Psoas muscle (tissue), 8 donors: ENCODE measurements at regions of chr9 and their contacts with region 1.

Region 1: DNA sequence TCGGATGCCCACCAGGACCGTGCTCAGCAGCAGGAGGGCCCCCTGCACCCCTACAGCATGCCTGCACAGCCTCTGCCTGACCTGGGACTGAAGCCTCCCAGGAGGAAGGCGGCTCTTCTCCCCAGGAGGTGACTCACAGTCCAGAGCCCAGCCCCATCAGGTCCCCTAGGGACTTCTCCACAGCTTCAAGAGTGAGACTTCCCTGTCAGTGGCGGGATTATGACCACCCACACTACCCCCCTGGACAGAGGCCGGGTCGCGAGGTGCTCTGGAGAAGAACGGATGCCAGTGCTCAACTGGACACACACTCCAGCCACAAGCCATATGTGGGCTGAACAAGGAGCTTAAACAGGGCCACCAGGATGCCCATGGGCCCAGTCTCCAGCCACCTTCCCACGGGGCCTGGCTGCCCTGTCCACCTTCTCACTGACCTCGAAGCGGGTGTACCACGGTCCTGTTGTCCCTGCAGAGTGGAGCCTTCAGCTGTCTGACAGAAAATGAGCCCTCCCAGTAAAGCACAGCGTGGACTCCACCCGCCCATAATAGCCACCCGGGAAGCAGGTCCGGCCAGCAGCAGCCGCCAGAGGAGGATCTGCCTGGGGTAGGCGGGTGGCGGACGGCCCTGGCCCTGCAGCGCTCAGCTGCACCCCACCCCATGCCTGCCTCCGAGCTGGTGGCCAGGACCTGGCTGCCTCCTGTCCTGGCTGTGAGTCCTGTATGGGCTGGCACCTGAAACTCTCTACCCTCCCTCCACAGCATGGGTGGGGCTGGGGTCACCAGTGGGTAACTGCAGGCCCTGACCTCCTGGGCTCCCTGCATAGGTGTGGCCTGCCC is 54.7 kb downstream of the SEMA4D start:
- DNase-seq: no peak
- ATAC-seq: no peak
- H3K4me3 ChIP-seq: no peak overlapping the region
- H3K27ac ChIP-seq: no peak overlapping the region
- H3K4me1 ChIP-seq: peaks cover 58% of the 10 kb centered on the region
- H3K27me3 ChIP-seq: no peaks in the 10 kb centered on the region
- CTCF ChIP-seq: no peak

Region 2: DNA sequence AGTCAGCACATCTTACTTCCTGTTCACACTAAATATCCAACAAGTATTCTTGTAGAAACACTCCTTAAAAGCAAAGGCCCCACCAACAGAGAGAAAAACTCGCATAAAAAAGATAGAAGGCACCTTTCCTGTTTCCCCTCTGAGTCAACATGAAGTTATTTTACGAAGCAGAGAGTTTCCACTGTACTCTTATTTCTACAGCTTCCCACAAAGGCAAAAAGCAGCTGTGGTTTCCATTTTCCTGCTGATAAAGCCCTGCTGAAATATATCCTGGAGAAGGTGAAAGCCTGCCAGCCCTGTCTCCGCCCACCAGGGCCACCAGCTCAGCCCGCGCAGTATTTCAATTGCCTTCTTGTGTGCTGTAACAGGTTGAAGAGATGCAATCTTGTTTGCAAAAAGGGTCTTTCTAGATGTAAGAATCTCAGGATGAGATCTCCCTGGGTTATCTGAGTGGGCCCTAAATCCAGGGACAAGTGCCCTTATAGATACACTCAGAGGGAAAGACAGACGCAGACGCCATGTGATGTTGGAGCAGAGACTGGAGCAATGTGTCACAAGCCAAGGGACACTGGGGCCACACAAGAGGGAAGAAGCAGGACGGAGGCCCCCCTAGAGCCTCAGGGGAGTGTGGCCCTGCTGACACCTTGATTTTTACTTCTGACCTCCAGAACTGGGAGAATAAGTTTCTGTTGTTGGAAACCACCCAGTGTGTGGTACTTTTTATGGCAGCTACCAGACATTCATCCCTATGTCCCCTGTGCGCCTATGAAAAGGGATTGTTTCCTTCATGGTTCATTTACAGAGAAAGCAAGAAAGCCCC is 34.8 kb after region 1 on chr9:
- intact Hi-C with region 1: loop called (anchors 2 to 5 kb)
- DNase-seq: no peak
- ATAC-seq: no peak
- H3K4me3 ChIP-seq: peak overlapping the region; percentile 19
- H3K27ac ChIP-seq: peak overlapping the region; percentile 50
- H3K4me1 ChIP-seq: peaks cover 60% of the 10 kb centered on the region
- H3K27me3 ChIP-seq: no peaks in the 10 kb centered on the region
- CTCF ChIP-seq: no peak

Region 3: GRCh38 chr9:89483592-89484522 is 40.7 kb after region 1 on chr9:
- intact Hi-C with region 1: loop called (anchors 2 to 5 kb)
- DNase-seq: no peak
- ATAC-seq: peak; percentile 19 to 36 (median 34)
- H3K4me3 ChIP-seq: peak overlapping the region; percentile 43
- H3K27ac ChIP-seq: peak overlapping the region; percentile 94
- H3K4me1 ChIP-seq: peaks cover 63% of the 10 kb centered on the region
- H3K27me3 ChIP-seq: no peaks in the 10 kb centered on the region
- CTCF ChIP-seq: no peak